Activated naive CD4-positive, alpha-beta T cell treated with anti-CD3 and anti-CD28 coated beads, Interleukin-2, amount 10 ng/mL, durations not matched to agents 7 days and 5 days (primary cell): ENCODE measurements at regions of chr1 and their contacts with region 1.

Region 1: GRCh38 chr1:78617615-78618026 is 2.6 kb upstream of the IFI44L start:
- DNase-seq: peak; percentile 65
- H3K4me3 Mint-ChIP-seq: no peak overlapping the region
- H3K27ac Mint-ChIP-seq: no peak overlapping the region
- H3K4me1 Mint-ChIP-seq: peaks cover 38% of the 10 kb centered on the region
- H3K27me3 Mint-ChIP-seq: peaks cover 7% of the 10 kb centered on the region

Region 2: GRCh38 chr1:78676347-78676982 is 58.8 kb after region 1 on chr1:
- CTCF ChIA-PET with region 1: interaction called, 30 read pairs
- DNase-seq: peak; percentile 67
- H3K4me3 Mint-ChIP-seq: no peak overlapping the region
- H3K27ac Mint-ChIP-seq: no peak overlapping the region
- H3K4me1 Mint-ChIP-seq: peaks cover 19% of the 10 kb centered on the region
- H3K27me3 Mint-ChIP-seq: peaks cover 4% of the 10 kb centered on the region

Region 3: DNA sequence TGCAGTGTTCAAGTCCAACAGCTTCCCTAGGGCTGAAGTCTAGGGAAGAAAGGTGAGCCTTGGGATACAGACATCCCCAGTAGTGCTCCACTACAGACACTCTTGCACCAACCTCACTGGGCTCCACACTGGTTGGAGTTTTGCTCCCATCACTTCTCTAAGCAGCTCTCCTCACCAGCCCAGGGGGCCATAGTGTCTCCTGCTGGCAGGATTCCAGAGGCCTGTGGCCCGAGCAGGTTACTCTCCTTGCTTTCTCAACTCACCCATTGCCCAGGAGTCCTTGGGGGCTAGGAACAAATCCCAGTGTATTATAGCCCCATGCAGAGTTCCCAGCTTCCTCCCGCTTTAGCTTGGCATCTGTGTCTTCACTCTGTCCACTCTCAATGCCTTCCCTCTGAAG is 84.8 kb after region 1 on chr1:
- CTCF ChIA-PET with region 1: no interaction called
- DNase-seq: no peak
- H3K4me3 Mint-ChIP-seq: no peak overlapping the region
- H3K27ac Mint-ChIP-seq: no peak overlapping the region
- H3K4me1 Mint-ChIP-seq: no peaks in the 10 kb centered on the region
- H3K27me3 Mint-ChIP-seq: peaks cover 16% of the 10 kb centered on the region